ENCODE measurements at regions of chr1 and their contacts with region 1.

Region 1: GRCh38 chr1:235367000-235367908 is at the start of gene TBCE:
- DNase-seq: peak; percentile 97
- ATAC-seq: peak; percentile 100
- H3K4me3 ChIP-seq: peak within 1 kb of the TSS; percentile 81 to 93
- H3K27ac ChIP-seq: peak within 1 kb of the TSS; percentile 94
- H3K4me1 ChIP-seq: peaks cover 5% of the 10 kb centered on the region
- H3K27me3 ChIP-seq: no peaks in the 10 kb centered on the region
- CTCF ChIP-seq: no peak
- total RNA-seq, gene TBCE: 72.0 TPM

Region 2: DNA sequence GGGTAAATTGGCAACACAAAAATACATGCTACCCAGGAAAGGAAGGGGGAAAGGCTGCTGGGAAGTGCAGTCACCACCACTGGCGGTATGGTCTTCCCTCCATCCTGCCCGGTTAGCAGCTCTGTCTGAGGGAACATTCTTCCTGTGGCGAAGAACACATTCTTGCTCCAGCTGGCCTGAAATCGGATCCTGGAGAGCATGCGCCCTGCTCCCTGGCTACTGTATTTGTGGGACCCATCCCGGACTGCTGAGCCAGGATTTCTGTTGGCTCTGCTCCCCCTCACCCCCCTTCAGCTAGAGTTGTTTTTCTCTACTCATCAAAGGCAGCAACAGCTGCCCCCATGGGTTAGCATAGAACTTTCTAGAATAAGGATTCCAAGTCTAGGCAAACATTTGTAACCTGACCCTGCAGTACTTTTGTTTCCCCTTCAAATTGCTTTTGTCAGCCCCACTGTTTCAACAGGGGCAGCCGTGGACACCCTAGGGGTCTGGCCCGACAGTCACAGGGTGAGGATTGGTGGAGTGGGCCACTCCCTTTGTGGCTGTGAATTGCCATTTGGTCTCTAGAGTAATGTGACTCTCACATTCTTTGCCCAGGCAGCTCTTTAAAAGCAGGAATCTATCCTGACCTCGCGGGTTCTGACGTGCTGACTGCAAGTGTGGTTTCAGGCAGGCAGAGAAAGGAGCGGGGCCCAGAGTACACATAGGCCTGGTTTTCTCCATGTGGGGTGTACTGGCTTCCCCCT is 396.4 kb before region 1 on chr1:
- CTCF ChIA-PET with region 1: no interaction called
- POLR2A ChIA-PET with region 1: no interaction called
- in situ Hi-C with region 1: no loop called
- intact Hi-C with region 1: no loop called
- DNase-seq: no peak
- ATAC-seq: no peak
- H3K4me3 ChIP-seq: no peak overlapping the region
- H3K27ac ChIP-seq: peak overlapping the region; percentile 100
- H3K4me1 ChIP-seq: peaks cover 68% of the 10 kb centered on the region
- H3K27me3 ChIP-seq: no peaks in the 10 kb centered on the region
- CTCF ChIP-seq: no peak

Region 3: GRCh38 chr1:235030919-235031596 is 336.2 kb before region 1 on chr1:
- CTCF ChIA-PET with region 1: no interaction called
- POLR2A ChIA-PET with region 1: no interaction called
- in situ Hi-C with region 1: no loop called
- intact Hi-C with region 1: no loop called
- DNase-seq: no peak
- ATAC-seq: no peak
- H3K4me3 ChIP-seq: no peak overlapping the region
- H3K27ac ChIP-seq: no peak overlapping the region
- H3K4me1 ChIP-seq: no peaks in the 10 kb centered on the region; the same call in 1 of the 2 replicates
- H3K27me3 ChIP-seq: no peaks in the 10 kb centered on the region
- CTCF ChIP-seq: no peak

Region 4: GRCh38 chr1:235351898-235352297 is 15.4 kb before region 1 on chr1:
- CTCF ChIA-PET with region 1: no interaction called
- POLR2A ChIA-PET with region 1: no interaction called
- in situ Hi-C with region 1: no loop called
- intact Hi-C with region 1: no loop called
- DNase-seq: no peak
- ATAC-seq: no peak
- H3K4me3 ChIP-seq: no peak overlapping the region
- H3K27ac ChIP-seq: no peak overlapping the region
- H3K4me1 ChIP-seq: no peaks in the 10 kb centered on the region
- H3K27me3 ChIP-seq: no peaks in the 10 kb centered on the region
- CTCF ChIP-seq: no peak

Region 5: GRCh38 chr1:235404195-235404594 is 36.9 kb after region 1 on chr1:
- CTCF ChIA-PET with region 1: no interaction called
- POLR2A ChIA-PET with region 1: interaction called, 4 read pairs
- in situ Hi-C with region 1: no loop called
- intact Hi-C with region 1: loop called (anchors 5 kb)
- DNase-seq: no peak
- ATAC-seq: peak; percentile 27
- H3K4me3 ChIP-seq: no peak overlapping the region
- H3K27ac ChIP-seq: peak overlapping the region; percentile 98
- H3K4me1 ChIP-seq: peaks cover 92% of the 10 kb centered on the region
- H3K27me3 ChIP-seq: no peaks in the 10 kb centered on the region
- CTCF ChIP-seq: no peak

Region 6: GRCh38 chr1:235504496-235505222 is 137.4 kb after region 1 on chr1:
- CTCF ChIA-PET with region 1: interaction called, 10 read pairs
- POLR2A ChIA-PET with region 1: no interaction called
- in situ Hi-C with region 1: no loop called
- intact Hi-C with region 1: no loop called
- DNase-seq: peak; percentile 95
- ATAC-seq: peak; percentile 94
- H3K4me3 ChIP-seq: peak overlapping the region; percentile 92 to 94
- H3K27ac ChIP-seq: peak overlapping the region; percentile 98
- H3K4me1 ChIP-seq: peaks cover 11% of the 10 kb centered on the region
- H3K27me3 ChIP-seq: no peaks in the 10 kb centered on the region
- CTCF ChIP-seq: peak; percentile 95

Measured in Panc1 (cell line).